Heart left ventricle (tissue), 16 donors: ENCODE measurements at regions of chr10 and their contacts with region 1.

Region 1: DNA sequence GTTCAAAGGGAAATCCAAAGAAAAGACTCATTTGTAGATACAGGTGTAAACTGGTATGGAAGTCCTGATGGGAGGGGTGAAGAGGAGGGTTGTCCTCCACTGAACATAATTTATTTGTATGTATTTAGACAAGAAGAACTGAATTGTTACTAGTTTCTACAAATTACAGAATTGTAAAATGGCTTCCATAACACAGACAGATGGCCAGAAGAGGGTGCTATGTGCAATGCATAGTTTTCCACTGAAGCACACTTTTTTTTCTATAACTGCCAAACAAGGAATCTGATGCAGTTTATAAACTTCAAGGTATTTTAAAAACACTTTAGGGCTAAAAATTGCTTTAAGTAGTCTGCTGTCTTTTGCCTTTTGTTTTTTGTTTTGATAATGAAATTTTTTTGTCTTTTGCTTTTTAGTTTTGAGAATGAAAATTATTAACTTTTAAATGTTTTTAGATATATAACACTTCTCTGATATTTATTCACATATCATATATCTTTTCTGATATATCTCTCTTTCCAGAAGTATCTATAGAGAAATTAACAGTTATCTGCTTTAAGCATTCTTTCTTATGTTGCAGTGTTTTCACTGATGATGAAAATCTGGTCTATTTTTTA is 58.5 kb downstream of the PHYHIPL start:
- DNase-seq: peak in 1 of 5 donors; percentile 15
- ATAC-seq: no peak
- H3K4me3 ChIP-seq: no peak overlapping the region
- H3K27ac ChIP-seq: no peak overlapping the region
- H3K4me1 ChIP-seq: no peaks in the 10 kb centered on the region
- H3K27me3 ChIP-seq: no peaks in the 10 kb centered on the region
- CTCF ChIP-seq: peak in 11 of 12 donors; percentile 44 to 75 (median 56)
- POLR2A ChIP-seq: no peak

Region 2: DNA sequence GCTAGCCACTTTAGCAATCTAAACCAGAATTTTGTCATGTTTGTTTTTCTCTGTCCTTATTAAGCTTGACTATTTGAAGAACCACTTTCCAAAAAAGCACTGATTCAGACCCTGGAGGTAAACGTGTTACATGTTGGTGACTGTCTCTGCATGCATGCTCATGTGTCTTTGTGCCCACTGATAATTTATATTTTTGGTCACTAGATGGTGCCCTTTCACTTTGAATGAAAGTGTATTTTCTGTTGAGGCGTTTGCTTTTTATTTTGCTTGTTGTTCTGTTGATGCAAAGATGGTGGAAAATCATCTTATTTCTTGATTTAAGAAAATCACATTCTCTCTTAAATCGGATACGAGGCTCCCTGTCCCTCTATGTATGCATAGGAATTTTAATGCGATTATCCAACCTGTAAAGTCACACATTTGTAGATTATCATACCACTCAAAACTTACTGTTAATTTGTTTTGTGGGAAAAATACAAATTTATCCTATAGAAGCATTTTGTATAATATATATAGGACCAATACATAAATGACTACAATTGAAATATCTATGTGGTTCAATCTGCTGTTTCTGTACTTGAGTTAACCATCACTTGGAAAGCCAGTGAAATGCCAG is 452.9 kb before region 1 on chr10:
- intact Hi-C with region 1: loop called in 3 of 10 experiments (anchors 5 to 10 kb)
- DNase-seq: no peak
- ATAC-seq: peak in 2 of 4 donors; percentile 51 to 58
- H3K4me3 ChIP-seq: no peak overlapping the region
- H3K27ac ChIP-seq: peak overlapping the region in 8 of 12 donors; percentile 5 to 61 (median 40)
- H3K4me1 ChIP-seq: peaks cover 0 to 46% (median 9%) of the 10 kb centered on the region in 12 donors
- H3K27me3 ChIP-seq: no peaks in the 10 kb centered on the region
- CTCF ChIP-seq: peak; percentile 39 to 72 (median 61)
- POLR2A ChIP-seq: no peak

Region 3: GRCh38 chr10:58952747-58953466 is 282.0 kb before region 1 on chr10:
- intact Hi-C with region 1: loop called in 5 of 10 experiments (anchors 5 to 10 kb)
- DNase-seq: peak in 2 of 5 donors; percentile 23 to 36
- ATAC-seq: peak; percentile 38 to 76 (median 70)
- H3K4me3 ChIP-seq: peak overlapping the region in 1 of 12 donors; percentile 11
- H3K27ac ChIP-seq: peak overlapping the region in 7 of 12 donors; percentile 32 to 88 (median 71)
- H3K4me1 ChIP-seq: peaks cover 0 to 13% (median 0%) of the 10 kb centered on the region in 12 donors
- H3K27me3 ChIP-seq: no peaks in the 10 kb centered on the region
- CTCF ChIP-seq: peak; percentile 61 to 86 (median 78)
- POLR2A ChIP-seq: no peak

Region 4: GRCh38 chr10:59019603-59020002 is 215.3 kb before region 1 on chr10:
- intact Hi-C with region 1: no loop called
- DNase-seq: no peak
- ATAC-seq: no peak
- H3K4me3 ChIP-seq: peak overlapping the region in 8 of 12 donors; percentile 8 to 49 (median 24)
- H3K27ac ChIP-seq: peak overlapping the region in 3 of 12 donors; percentile 13 to 54 (median 51)
- H3K4me1 ChIP-seq: peaks cover 0 to 6% (median 0%) of the 10 kb centered on the region in 12 donors
- H3K27me3 ChIP-seq: no peaks in the 10 kb centered on the region
- CTCF ChIP-seq: no peak
- POLR2A ChIP-seq: no peak

Region 5: GRCh38 chr10:59098387-59098786 is 136.5 kb before region 1 on chr10:
- intact Hi-C with region 1: no loop called
- DNase-seq: peak in 1 of 5 donors; percentile 22
- ATAC-seq: peak in 2 of 4 donors; percentile 32 to 45
- H3K4me3 ChIP-seq: no peak overlapping the region
- H3K27ac ChIP-seq: peak overlapping the region in 1 of 12 donors; percentile 11
- H3K4me1 ChIP-seq: peaks cover 0 to 5% (median 0%) of the 10 kb centered on the region in 12 donors
- H3K27me3 ChIP-seq: no peaks in the 10 kb centered on the region
- CTCF ChIP-seq: no peak
- POLR2A ChIP-seq: no peak

Region 6: GRCh38 chr10:59195389-59195788 is 39.5 kb before region 1 on chr10:
- intact Hi-C with region 1: no loop called
- DNase-seq: no peak
- ATAC-seq: no peak
- H3K4me3 ChIP-seq: no peak overlapping the region
- H3K27ac ChIP-seq: no peak overlapping the region
- H3K4me1 ChIP-seq: no peaks in the 10 kb centered on the region
- H3K27me3 ChIP-seq: no peaks in the 10 kb centered on the region
- CTCF ChIP-seq: no peak
- POLR2A ChIP-seq: no peak

Region 7: GRCh38 chr10:59283456-59284091 is 48.7 kb after region 1 on chr10:
- intact Hi-C with region 1: no loop called
- DNase-seq: no peak
- ATAC-seq: no peak
- H3K4me3 ChIP-seq: no peak overlapping the region
- H3K27ac ChIP-seq: no peak overlapping the region
- H3K4me1 ChIP-seq: peaks cover 0 to 10% (median 0%) of the 10 kb centered on the region in 12 donors
- H3K27me3 ChIP-seq: no peaks in the 10 kb centered on the region
- CTCF ChIP-seq: no peak
- POLR2A ChIP-seq: no peak

Region 8: GRCh38 chr10:59808896-59809643 is 574.1 kb after region 1 on chr10:
- intact Hi-C with region 1: loop called in 2 of 10 experiments (anchors 5 to 10 kb)
- DNase-seq: peak; percentile 68 to 87 (median 81)
- ATAC-seq: peak; percentile 45 to 82 (median 76)
- H3K4me3 ChIP-seq: no peak overlapping the region
- H3K27ac ChIP-seq: peak overlapping the region in 3 of 12 donors; percentile 30 to 51 (median 32)
- H3K4me1 ChIP-seq: peaks cover 0 to 20% (median 2%) of the 10 kb centered on the region in 12 donors
- H3K27me3 ChIP-seq: no peaks in the 10 kb centered on the region
- CTCF ChIP-seq: peak; percentile 50 to 75 (median 64)
- POLR2A ChIP-seq: no peak

Region 9: GRCh38 chr10:59814878-59815277 is 580.0 kb after region 1 on chr10:
- intact Hi-C with region 1: loop called in 3 of 10 experiments (anchors 5 to 10 kb)
- DNase-seq: no peak
- ATAC-seq: no peak
- H3K4me3 ChIP-seq: no peak overlapping the region
- H3K27ac ChIP-seq: no peak overlapping the region
- H3K4me1 ChIP-seq: peaks cover 0 to 24% (median 5%) of the 10 kb centered on the region in 12 donors
- H3K27me3 ChIP-seq: no peaks in the 10 kb centered on the region
- CTCF ChIP-seq: no peak
- POLR2A ChIP-seq: no peak

Region 10: GRCh38 chr10:59830601-59831259 is 595.8 kb after region 1 on chr10:
- intact Hi-C with region 1: loop called in 3 of 10 experiments (anchors 5 to 10 kb)
- DNase-seq: peak in 4 of 5 donors; percentile 26 to 40 (median 34)
- ATAC-seq: peak in 3 of 4 donors; percentile 56 to 73 (median 57)
- H3K4me3 ChIP-seq: no peak overlapping the region
- H3K27ac ChIP-seq: no peak overlapping the region
- H3K4me1 ChIP-seq: peaks cover 0 to 41% (median 9%) of the 10 kb centered on the region in 12 donors
- H3K27me3 ChIP-seq: no peaks in the 10 kb centered on the region
- CTCF ChIP-seq: peak; percentile 64 to 87 (median 78)
- POLR2A ChIP-seq: no peak